ENCODE measurements at regions of chr4 and their contacts with region 1.

Region 1: DNA sequence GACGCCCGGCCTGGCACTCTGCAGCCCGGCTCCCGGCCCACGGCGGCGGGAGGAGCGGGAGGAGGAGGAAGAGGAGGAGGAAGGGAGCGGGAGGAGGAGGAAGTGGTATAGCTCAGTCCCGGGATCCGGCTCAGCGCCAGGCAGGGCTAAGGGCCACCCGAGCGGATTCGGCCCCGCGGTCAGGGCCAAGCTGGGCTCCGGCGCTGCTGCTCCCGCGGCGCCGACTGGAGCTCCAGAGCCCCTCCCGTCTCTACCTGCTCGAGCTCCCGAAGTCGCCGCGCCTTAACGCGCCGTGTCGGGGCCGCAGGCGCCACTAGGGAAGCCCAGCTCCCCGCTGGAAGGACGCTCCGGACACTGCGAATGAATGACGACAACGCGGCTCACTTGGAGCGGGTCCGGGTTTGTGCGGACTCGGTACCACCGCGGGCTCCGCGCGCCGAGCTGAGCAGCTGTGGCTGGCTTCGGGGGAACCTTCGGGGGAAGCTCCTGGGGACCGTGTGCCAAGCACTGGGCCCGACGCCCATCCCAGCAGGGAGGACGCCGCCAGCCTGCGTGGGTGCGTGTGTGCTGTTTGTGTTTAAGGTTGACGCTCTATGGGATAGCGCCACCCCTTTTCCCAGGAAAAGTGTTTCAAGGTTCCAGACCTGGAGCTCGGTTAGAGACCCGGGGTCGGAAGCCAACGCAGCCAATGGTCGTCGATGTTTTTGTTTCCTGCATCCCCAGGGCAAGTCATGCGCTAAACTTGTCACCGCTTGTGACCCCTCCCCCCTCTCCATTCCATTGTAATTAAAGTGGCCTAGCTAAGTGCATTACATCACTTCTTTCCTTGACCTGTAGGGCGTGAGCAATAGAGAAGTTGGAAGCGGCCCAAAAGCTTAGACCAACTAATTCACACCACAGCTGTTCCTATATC is at the start of gene TBC1D9:
- DNase-seq: peak; percentile 80 to 88
- ATAC-seq: peak; percentile 83
- total RNA-seq, gene TBC1D9: 10.7 to 20.5 TPM

Region 2: DNA sequence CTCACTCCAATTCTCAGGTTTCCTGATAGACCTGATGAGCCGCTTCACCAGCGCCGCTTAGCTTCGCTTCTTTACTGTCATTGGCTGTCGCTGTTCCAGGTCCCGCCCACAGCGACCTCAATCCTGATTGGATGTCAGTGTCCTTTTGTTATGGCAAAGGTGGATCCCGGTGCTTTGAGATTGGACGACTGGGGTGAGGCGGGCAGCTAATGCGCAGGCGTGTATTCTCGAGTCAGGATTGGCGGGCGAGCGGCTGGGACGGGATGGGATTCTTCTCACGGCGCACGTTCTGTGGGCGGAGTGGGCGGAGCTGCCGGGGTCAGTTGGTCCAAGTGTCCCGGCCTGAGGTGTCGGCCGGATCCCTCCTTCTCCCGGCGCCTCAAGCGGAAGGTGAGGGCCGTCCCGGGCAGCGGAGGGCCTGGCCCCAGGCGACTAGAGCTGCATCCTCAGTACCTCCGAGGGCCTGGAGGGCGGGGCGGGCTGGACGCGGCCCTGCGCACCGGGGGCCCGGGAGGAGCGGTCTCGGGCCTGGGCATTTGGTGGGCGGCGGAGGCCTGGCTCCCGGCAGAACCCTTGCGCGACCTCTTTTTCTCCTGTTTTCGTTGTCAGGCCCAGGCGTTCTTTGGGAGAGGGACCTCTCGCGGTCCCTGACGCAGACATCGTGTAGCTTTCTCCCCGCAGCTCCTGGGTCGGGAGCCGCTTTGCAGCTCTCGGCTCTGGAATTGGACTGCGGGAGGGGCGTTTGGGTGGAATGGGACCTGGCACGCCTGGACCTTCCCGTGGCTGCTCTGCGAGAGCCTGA is 383.0 kb before region 1 on chr4 and contains the start of gene SCOC:
- intact Hi-C with region 1: loop called in 1 of 2 experiments (anchors 10 kb)
- DNase-seq: peak; percentile 99
- ATAC-seq: peak; percentile 94
- total RNA-seq, gene SCOC: 49.5 to 55.4 TPM

Measured in left colon (tissue), 2 donors.